Gastrocnemius medialis (tissue), 4 donors: ENCODE measurements at regions of chr5 and their contacts with region 1.

Region 1: GRCh38 chr5:143279698-143280097 is 123.8 kb downstream of the NR3C1 start:
- DNase-seq: no peak
- ATAC-seq: no peak
- H3K4me3 ChIP-seq: no peak overlapping the region
- H3K27ac ChIP-seq: no peak overlapping the region
- H3K4me1 ChIP-seq: no peaks in the 10 kb centered on the region
- H3K27me3 ChIP-seq: no peaks in the 10 kb centered on the region
- CTCF ChIP-seq: no peak
- POLR2A ChIP-seq: no peak

Region 2: GRCh38 chr5:142994218-142994617 is 285.5 kb before region 1 on chr5:
- in situ Hi-C with region 1: no loop called
- intact Hi-C with region 1: no loop called
- DNase-seq: no peak
- ATAC-seq: no peak
- H3K4me3 ChIP-seq: no peak overlapping the region
- H3K27ac ChIP-seq: no peak overlapping the region
- H3K4me1 ChIP-seq: no peaks in the 10 kb centered on the region
- H3K27me3 ChIP-seq: no peaks in the 10 kb centered on the region
- CTCF ChIP-seq: no peak
- POLR2A ChIP-seq: no peak

Region 3: DNA sequence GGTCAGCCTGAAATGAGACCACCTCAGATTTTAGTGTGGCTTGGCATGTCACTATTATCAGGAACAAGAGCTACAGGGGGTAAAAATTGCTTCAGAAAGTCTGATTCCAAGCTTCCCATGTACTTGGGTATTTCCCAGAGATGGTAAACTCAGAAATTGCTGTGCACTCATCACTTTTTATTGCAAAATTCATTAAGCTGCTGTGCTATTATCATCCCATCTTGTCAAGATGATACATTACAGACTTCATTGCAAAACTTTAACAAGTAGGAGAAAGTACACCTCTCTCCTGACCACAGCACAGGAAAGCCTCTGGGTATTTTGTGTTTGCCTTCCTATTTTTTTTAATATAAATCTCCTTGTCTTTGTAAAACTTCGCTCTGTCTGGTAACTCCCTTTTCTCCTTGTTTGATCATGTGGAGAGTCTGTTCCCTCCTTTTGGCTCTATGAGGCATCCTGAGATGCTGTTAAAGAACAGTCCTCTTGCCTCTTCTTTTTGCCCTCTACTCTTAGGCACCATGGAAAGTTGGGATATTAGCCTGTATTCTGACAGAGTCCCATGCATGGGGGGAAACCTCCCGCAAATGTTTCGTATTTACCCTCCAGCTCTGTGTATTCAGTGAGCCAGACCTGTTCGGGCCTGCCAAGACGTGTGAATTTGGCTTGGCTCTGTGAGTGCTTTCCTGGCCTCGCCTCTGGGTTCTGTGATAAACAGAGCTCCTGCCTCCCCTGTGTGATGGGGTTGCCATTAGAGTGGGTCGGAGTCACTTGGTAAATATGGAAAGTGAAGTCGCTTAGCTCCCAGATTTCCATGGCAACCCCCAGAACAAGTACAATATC is 136.9 kb before region 1 on chr5:
- in situ Hi-C with region 1: no loop called
- intact Hi-C with region 1: no loop called
- DNase-seq: peak; percentile 56 to 68
- ATAC-seq: peak; percentile 37 to 62
- H3K4me3 ChIP-seq: no peak overlapping the region
- H3K27ac ChIP-seq: peak overlapping the region; percentile 90 to 97 (median 95)
- H3K4me1 ChIP-seq: peaks cover 82 to 85% of the 10 kb centered on the region in 2 donors
- H3K27me3 ChIP-seq: no peaks in the 10 kb centered on the region
- CTCF ChIP-seq: no peak
- POLR2A ChIP-seq: no peak

Region 4: GRCh38 chr5:143258559-143259253 is 21.0 kb before region 1 on chr5:
- in situ Hi-C with region 1: no loop called
- intact Hi-C with region 1: loop called (anchors 2 kb)
- DNase-seq: no peak
- ATAC-seq: no peak
- H3K4me3 ChIP-seq: no peak overlapping the region
- H3K27ac ChIP-seq: no peak overlapping the region
- H3K4me1 ChIP-seq: no peaks in the 10 kb centered on the region
- H3K27me3 ChIP-seq: no peaks in the 10 kb centered on the region
- CTCF ChIP-seq: no peak
- POLR2A ChIP-seq: no peak